Esophagus muscularis mucosa (tissue), 4 donors: ENCODE measurements at regions of chr10 and their contacts with region 1.

Region 1: DNA sequence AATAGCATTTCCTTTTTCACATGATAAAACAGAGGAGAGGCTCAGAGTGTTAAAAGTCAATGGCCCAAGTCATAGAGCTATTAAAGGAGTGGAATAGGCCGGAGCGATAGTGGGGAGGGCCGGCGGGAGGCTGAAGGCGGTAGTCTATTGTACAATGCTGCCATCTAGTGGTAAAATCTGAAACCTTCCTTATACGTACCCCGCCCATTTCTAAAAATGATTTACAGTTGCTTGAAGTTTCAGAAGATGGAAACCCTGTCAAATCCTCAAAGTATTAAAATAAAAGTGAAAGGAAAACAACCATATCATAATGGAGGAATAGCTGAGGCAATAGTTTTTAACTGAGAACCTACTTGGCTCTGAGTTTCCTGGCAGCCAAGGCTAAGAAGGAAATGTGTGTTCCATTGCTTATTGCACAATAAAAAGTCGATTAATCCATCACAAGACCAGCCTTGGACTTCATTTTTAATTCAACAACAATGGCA is 209.1 kb downstream of the CCSER2 start:
- DNase-seq: no peak
- H3K4me3 ChIP-seq: no peak overlapping the region
- H3K27ac ChIP-seq: no peak overlapping the region
- H3K4me1 ChIP-seq: peaks cover 0 to 12% (median 11%) of the 10 kb centered on the region in 4 donors
- H3K27me3 ChIP-seq: peaks cover 0 to 37% (median 2%) of the 10 kb centered on the region in 4 donors
- CTCF ChIP-seq: peak; percentile 83 to 91 (median 83)
- EP300 ChIP-seq: no peak
- POLR2A ChIP-seq: no peak

Region 2: GRCh38 chr10:84375011-84375410 is 162.5 kb before region 1 on chr10:
- intact Hi-C with region 1: loop called (anchors 2 kb)
- DNase-seq: no peak
- H3K4me3 ChIP-seq: no peak overlapping the region
- H3K27ac ChIP-seq: no peak overlapping the region
- H3K4me1 ChIP-seq: no peaks in the 10 kb centered on the region
- H3K27me3 ChIP-seq: no peaks in the 10 kb centered on the region
- CTCF ChIP-seq: peak; percentile 59 to 74 (median 73)
- EP300 ChIP-seq: no peak
- POLR2A ChIP-seq: no peak

Region 3: GRCh38 chr10:84499846-84500245 is 37.6 kb before region 1 on chr10:
- intact Hi-C with region 1: no loop called
- DNase-seq: no peak
- H3K4me3 ChIP-seq: no peak overlapping the region
- H3K27ac ChIP-seq: no peak overlapping the region
- H3K4me1 ChIP-seq: peaks cover 0 to 1% (median 0%) of the 10 kb centered on the region in 4 donors
- H3K27me3 ChIP-seq: no peaks in the 10 kb centered on the region
- CTCF ChIP-seq: no peak
- EP300 ChIP-seq: no peak
- POLR2A ChIP-seq: no peak

Region 4: DNA sequence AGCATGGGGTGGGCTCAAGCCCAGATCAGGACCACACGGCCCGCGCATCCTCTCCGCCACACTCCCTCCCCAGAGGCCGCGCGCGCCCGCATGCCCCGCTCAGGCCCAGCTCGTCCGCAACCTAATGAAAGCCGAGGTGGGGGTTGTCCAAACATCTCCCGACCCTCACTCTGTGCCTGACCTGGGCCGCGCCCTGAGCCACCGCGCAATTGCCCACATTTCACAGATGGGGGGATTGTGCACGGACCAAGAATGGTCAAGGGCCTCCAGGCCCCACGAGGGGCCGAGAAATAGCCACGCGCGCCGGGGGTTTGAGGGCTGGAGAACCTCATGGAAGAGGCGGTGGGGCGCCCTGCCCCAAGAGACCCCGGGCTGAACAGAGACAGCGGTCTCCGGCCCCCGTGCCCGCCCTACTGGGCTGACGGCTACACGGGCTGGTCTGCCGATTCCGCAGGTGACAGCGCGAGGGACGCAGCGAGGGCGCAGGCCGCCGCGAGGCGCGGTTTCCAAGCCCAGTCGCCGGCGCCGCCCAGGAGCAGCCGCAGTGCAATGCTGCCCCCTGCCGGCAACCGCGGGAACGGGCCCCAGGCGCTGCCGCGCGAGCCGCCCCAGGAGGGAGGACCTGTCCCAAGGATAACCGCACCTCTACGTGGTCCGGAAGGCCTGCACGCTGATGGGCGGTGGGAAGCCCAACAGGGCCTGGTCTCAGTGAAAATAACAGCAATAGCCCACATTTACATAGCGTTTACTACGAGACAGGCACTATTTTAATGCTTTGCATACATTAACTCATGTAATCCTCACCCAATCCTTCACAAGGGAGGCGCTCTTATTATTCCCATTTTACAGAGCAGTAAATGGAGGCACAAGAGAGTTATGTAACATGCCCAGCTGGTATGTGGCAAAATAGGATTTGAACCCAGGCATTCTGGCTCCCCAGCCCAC is 1839.6 kb after region 1 on chr10:
- intact Hi-C with region 1: loop called (anchors 2 kb)
- DNase-seq: no peak
- H3K4me3 ChIP-seq: peak overlapping the region; percentile 33 to 46 (median 42)
- H3K27ac ChIP-seq: no peak overlapping the region
- H3K4me1 ChIP-seq: peaks cover 4 to 11% (median 9%) of the 10 kb centered on the region in 4 donors
- H3K27me3 ChIP-seq: peaks cover 0 to 75% (median 3%) of the 10 kb centered on the region in 4 donors
- CTCF ChIP-seq: peak in 2 of 3 experiments; percentile 95 to 99
- EP300 ChIP-seq: no peak
- POLR2A ChIP-seq: no peak